A673 (cell line): ENCODE measurements at regions of chr10 and their contacts with region 1.

Region 1: GRCh38 chr10:67834375-67834774 is 3.6 kb downstream of the DNAJC12 start:
- DNase-seq: no peak
- H3K4me3 ChIP-seq: peak overlapping the region; percentile 55
- H3K27ac ChIP-seq: peak overlapping the region; percentile 60
- H3K4me1 ChIP-seq: peaks cover 29% of the 10 kb centered on the region
- H3K27me3 ChIP-seq: no peaks in the 10 kb centered on the region
- CTCF ChIP-seq: no peak

Region 2: GRCh38 chr10:67790534-67791408 is 43.6 kb before region 1 on chr10:
- CTCF ChIA-PET with region 1: no interaction called
- POLR2A ChIA-PET with region 1: no interaction called
- intact Hi-C with region 1: loop called (anchors 5 kb)
- DNase-seq: peak; percentile 94
- H3K4me3 ChIP-seq: no peak overlapping the region
- H3K27ac ChIP-seq: peak overlapping the region; percentile 96
- H3K4me1 ChIP-seq: peaks cover 57% of the 10 kb centered on the region
- H3K27me3 ChIP-seq: no peaks in the 10 kb centered on the region
- CTCF ChIP-seq: no peak